Ovary (tissue), 10 donors: ENCODE measurements at regions of chr16 and their contacts with region 1.

Region 1: DNA sequence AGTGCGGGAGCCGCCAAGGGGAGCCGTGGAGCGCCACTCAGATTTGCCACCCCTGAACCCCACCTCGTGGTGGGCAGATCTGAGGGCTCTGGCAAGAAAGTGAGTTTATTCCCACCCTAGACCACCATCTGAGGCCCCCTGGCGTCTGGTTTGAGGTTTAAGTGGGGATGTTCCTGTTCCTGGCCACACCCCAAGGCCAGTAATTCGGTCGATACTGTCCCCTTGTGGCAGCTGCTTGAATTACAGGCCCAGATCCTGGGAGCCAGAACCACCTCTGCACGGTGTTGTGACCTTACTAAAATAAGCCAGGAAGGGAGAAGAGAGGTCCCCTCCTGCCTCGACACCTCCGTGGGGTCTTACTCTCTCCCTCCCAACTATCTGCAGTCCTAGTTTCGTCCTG is 3.3 kb upstream of the LAT start:
- DNase-seq: no peak
- H3K4me3 ChIP-seq: no peak overlapping the region
- H3K27ac ChIP-seq: no peak overlapping the region
- H3K4me1 ChIP-seq: no peaks in the 10 kb centered on the region
- H3K27me3 ChIP-seq: no peaks in the 10 kb centered on the region
- CTCF ChIP-seq: no peak
- EP300 ChIP-seq: no peak
- POLR2A ChIP-seq: no peak

Region 2: GRCh38 chr16:29738514-29738913 is 757.0 kb after region 1 on chr16:
- intact Hi-C with region 1: loop called in 1 of 4 experiments (anchors 10 kb)
- DNase-seq: no peak
- H3K4me3 ChIP-seq: no peak overlapping the region
- H3K27ac ChIP-seq: no peak overlapping the region
- H3K4me1 ChIP-seq: no peaks in the 10 kb centered on the region
- H3K27me3 ChIP-seq: no peaks in the 10 kb centered on the region
- CTCF ChIP-seq: no peak
- EP300 ChIP-seq: no peak
- POLR2A ChIP-seq: no peak